Activated T-helper 2 cell treated with anti-CD3 and anti-CD28 coated beads, Interferon-gamma antibody, Interleukin-2, Interleukin-4, amounts not matched to agents 10 μg/mL and 5 μg/mL and 100 μg/mL, durations not matched to agents 14 hours and 24 hours and 36 hours (primary cell): ENCODE measurements at regions of chr5 and their contacts with region 1.

Region 1: GRCh38 chr5:73160239-73160671 is 12.7 kb upstream of the TMEM174 start:
- DNase-seq: peak; percentile 57
- H3K4me3 Mint-ChIP-seq: no peak overlapping the region
- H3K27ac Mint-ChIP-seq: no peak overlapping the region
- H3K4me1 Mint-ChIP-seq: peaks cover 18% of the 10 kb centered on the region
- H3K27me3 Mint-ChIP-seq: peaks cover 68% of the 10 kb centered on the region

Region 2: DNA sequence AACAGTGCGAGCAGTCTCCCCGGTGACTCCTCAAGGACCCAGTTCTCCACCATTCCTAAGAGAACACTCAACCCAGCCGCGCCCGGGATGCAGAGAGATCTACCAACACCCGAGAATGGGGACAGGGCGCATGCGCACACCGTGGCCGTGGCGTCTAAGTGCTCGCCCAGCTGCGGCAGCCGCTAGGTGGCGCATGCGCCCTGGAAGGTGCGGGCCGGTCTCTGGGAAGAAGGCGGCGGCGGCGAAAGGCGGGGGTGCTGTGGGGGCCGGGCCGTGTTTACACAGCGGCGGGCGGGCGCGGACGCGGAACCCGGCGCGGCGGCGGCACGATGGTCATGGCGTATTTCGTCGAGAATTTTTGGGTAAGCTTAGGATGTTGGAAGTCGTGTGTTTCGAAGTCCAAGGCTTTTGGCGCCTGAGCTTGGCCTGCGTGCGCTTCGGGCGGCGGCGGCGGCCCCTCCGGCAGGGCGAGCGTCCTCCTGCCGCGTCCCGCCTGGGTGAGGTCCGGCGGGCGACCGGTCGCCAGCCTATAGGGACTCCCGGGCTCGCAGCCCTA is 204.4 kb before region 1 on chr5 and contains the start of gene FCHO2:
- intact Hi-C with region 1: loop called (anchors 5 kb)
- DNase-seq: peak; percentile 90
- H3K4me3 Mint-ChIP-seq: peak within 1 kb of the TSS; percentile 86
- H3K27ac Mint-ChIP-seq: peak within 1 kb of the TSS; percentile 45
- H3K4me1 Mint-ChIP-seq: peaks cover 15% of the 10 kb centered on the region
- H3K27me3 Mint-ChIP-seq: peaks cover 56% of the 10 kb centered on the region
- total RNA-seq, gene FCHO2: 1.3 and 1.6 TPM in 2 replicates

Region 3: DNA sequence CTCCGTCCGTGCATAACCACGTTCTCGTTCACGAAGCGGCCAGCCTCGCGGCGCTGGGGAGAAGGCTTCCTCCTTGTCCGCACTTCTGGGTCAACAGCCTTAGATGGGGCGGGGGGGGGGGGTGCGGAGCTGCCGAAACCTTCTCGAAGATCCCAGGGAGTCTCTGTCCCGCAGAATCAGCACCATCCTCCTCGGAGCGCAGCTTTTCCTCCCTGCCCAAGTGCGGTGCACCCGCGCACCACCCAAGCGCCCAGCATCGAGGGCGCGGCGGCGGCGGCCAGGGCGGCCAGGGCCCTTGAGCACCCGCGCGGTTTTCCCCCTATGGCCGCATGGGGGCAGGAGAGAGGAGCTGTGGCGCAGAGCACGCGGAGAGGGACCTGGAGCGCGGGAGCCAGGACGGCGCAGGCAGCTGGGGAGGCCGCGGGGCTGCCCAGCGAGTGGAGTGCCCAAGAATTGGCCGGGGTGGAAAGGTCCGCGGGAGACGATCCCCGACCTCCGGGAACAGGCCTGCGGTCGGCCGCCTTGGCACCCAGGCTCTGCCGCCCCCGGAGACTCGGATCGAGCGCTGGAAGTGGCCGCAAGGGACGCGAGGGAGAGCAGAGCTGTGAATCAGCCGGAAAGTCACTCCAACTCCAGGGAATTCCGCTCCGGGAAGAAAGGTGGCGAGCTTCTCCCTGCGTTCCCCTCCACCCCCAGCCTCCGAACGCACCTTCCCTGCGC is 55.8 kb after region 1 on chr5:
- intact Hi-C with region 1: loop called (anchors 1 kb)
- DNase-seq: peak; percentile 28
- H3K4me3 Mint-ChIP-seq: no peak overlapping the region
- H3K27ac Mint-ChIP-seq: no peak overlapping the region
- H3K4me1 Mint-ChIP-seq: peaks cover 3% of the 10 kb centered on the region
- H3K27me3 Mint-ChIP-seq: peaks cover 74% of the 10 kb centered on the region